ENCODE measurements at regions of chr16 and their contacts with region 1.

Region 1: GRCh38 chr16:67672739-67673662 is 6.4 kb downstream of the C16orf86 start:
- DNase-seq: peak; percentile 71
- ATAC-seq: no peak
- H3K4me3 Mint-ChIP-seq: no peak overlapping the region
- H3K27ac Mint-ChIP-seq: no peak overlapping the region
- H3K4me1 Mint-ChIP-seq: no peaks in the 10 kb centered on the region
- H3K27me3 Mint-ChIP-seq: no peaks in the 10 kb centered on the region
- CTCF ChIP-seq: peak; percentile 69

Region 2: GRCh38 chr16:67660564-67661028 is 12.4 kb before region 1 on chr16 and contains the start of gene PARD6A:
- CTCF ChIA-PET with region 1: interaction called, 15 read pairs
- POLR2A ChIA-PET with region 1: no interaction called
- intact Hi-C with region 1: no loop called
- DNase-seq: peak; percentile 98
- ATAC-seq: peak; percentile 82
- H3K4me3 Mint-ChIP-seq: peak within 1 kb of the TSS; percentile 90
- H3K27ac Mint-ChIP-seq: peak within 1 kb of the TSS; percentile 92
- H3K4me1 Mint-ChIP-seq: peaks cover 18% of the 10 kb centered on the region
- H3K27me3 Mint-ChIP-seq: no peaks in the 10 kb centered on the region
- CTCF ChIP-seq: no peak
- total RNA-seq, gene PARD6A: 6.3 to 7.2 TPM

Region 3: DNA sequence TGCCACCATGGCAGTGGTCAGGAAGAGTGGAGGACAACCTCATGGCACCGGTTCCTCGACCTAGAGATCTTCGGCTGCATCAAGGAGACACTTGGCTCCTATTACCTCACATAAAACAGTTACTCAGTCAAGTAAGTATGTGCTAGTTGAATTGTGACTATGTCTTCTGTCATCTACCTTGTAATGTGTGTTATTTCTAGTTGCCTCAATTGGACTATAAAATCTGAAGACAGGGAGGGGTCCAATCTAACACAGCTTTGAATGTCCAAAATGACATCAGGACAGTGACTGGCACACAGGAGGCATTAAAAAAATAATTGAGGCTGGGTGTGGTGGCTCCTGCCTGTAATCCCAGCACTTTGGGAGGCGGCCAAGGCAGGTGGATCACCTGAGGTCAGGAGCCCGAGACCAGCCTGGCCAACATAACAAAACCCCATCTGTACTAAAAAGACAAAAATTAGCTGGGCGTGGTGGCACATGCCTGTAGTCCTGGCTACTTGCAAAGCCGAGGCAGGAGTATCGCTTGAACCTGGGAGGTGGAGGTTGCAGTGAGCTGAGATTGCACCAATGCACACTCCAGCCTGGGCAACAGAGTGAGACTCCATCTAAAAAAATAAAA is 10.9 kb after region 1 on chr16:
- CTCF ChIA-PET with region 1: interaction called, 10 read pairs
- POLR2A ChIA-PET with region 1: interaction called, 4 read pairs
- intact Hi-C with region 1: no loop called
- DNase-seq: no peak
- ATAC-seq: no peak
- H3K4me3 Mint-ChIP-seq: no peak overlapping the region
- H3K27ac Mint-ChIP-seq: no peak overlapping the region
- H3K4me1 Mint-ChIP-seq: no peaks in the 10 kb centered on the region
- H3K27me3 Mint-ChIP-seq: no peaks in the 10 kb centered on the region
- CTCF ChIP-seq: no peak

Region 4: GRCh38 chr16:67719048-67719777 is 46.2 kb after region 1 on chr16 and contains the start of gene GFOD2:
- CTCF ChIA-PET with region 1: interaction called, 11 read pairs
- POLR2A ChIA-PET with region 1: interaction called, 3 read pairs
- intact Hi-C with region 1: no loop called
- DNase-seq: peak; percentile 98
- ATAC-seq: peak; percentile 98
- H3K4me3 Mint-ChIP-seq: peak within 1 kb of the TSS; percentile 84
- H3K27ac Mint-ChIP-seq: peak within 1 kb of the TSS; percentile 98
- H3K4me1 Mint-ChIP-seq: peaks cover 32% of the 10 kb centered on the region
- H3K27me3 Mint-ChIP-seq: no peaks in the 10 kb centered on the region
- CTCF ChIP-seq: no peak
- total RNA-seq, gene GFOD2: 11.6 to 14.1 TPM

Region 5: DNA sequence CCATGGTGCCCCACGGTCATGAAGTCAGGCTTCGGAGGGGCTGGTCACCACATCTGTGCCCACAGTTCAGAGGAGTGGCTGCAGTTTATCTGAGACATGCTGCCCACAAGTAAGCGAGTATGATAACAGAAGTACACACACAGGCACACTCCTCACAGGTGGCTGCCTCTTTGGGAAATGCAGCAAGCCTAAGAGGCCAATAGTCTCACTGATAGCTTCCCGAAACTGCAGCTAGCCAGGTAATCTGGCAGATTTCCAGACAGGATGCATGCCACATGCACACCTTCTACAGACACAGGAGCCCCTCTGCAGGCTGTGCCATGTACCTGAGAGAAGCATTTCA is 58.7 kb after region 1 on chr16:
- CTCF ChIA-PET with region 1: no interaction called
- POLR2A ChIA-PET with region 1: no interaction called
- intact Hi-C with region 1: no loop called
- DNase-seq: no peak
- ATAC-seq: no peak
- H3K4me3 Mint-ChIP-seq: no peak overlapping the region
- H3K27ac Mint-ChIP-seq: no peak overlapping the region
- H3K4me1 Mint-ChIP-seq: no peaks in the 10 kb centered on the region
- H3K27me3 Mint-ChIP-seq: no peaks in the 10 kb centered on the region
- CTCF ChIP-seq: no peak

Region 6: DNA sequence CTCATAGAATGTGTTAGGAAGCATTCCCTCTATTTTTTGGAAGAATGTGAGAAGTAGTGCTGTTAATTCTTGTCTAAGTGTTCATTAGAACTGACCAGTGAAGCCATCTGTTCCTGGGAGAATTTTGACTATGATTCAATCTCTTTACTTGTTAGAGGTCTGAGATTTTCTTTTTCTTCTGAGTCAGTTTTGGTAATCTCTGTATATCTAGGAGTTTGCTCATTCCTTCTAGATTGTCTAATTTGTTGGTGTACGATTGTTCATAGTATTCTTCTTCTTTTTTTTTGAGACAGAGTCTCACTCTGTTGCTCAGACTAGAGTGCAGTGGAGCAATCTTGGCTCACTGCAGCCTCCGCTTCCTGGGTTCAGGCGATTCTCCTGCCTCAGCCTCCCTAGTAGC is 432.6 kb after region 1 on chr16:
- CTCF ChIA-PET with region 1: no interaction called
- POLR2A ChIA-PET with region 1: no interaction called
- intact Hi-C with region 1: no loop called
- DNase-seq: no peak
- ATAC-seq: no peak
- H3K4me3 Mint-ChIP-seq: no peak overlapping the region
- H3K27ac Mint-ChIP-seq: peak overlapping the region; percentile 37
- H3K4me1 Mint-ChIP-seq: peaks cover 74% of the 10 kb centered on the region
- H3K27me3 Mint-ChIP-seq: no peaks in the 10 kb centered on the region
- CTCF ChIP-seq: no peak

Measured in activated CD8-positive, alpha-beta T cell treated with anti-CD3 and anti-CD28 coated beads for 36 hours (primary cell).